ENCODE measurements at regions of chr15 and their contacts with region 1.

Region 1: DNA sequence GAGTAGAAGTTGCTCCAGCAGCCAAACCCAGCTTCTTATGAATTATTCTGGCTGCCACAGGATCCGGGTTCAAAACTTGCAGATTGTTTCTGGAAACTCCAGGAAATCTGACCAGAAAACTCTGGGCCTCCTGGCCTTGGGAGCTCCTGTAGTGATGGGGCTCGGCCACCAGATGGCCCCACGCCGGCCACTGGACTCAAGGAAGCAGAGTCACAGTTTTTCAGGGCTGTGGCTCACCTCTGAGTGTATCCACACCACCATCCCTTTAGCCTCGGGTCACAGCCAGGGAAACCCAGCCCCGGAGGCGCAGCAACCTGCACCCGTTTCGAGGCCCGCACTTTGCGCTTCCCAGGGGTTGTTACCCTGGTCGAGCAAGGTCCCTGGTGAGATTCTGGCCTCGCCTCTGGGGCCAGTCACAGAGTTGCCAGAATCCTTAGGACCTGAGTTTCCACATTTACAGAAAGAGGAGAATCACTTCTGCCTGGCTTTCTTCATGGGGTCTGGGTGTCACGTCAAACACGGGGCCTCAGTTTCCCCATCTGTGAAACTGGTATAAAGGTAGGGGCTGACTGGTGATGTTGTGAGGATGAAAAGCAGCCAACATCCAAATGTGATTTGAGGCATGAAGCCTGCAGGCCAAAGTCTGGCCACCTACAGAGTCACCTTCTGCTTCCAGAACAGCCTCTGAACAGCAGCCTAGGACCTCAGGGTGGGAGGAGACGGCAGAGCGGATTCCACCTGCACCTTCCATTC is 53.5 kb upstream of the LCTL start:
- DNase-seq: peak; percentile 76 to 77
- H3K4me3 ChIP-seq: no peak overlapping the region
- H3K27ac ChIP-seq: peak overlapping the region; percentile 6 to 21
- H3K4me1 ChIP-seq: peaks cover 0 to 9% of the 10 kb centered on the region in 2 donors
- H3K27me3 ChIP-seq: no peaks in the 10 kb centered on the region
- CTCF ChIP-seq: peak; percentile 89 to 94 (median 92)
- POLR2A ChIP-seq: no peak

Region 2: GRCh38 chr15:66657185-66658020 is 38.1 kb after region 1 on chr15:
- intact Hi-C with region 1: no loop called
- DNase-seq: no peak
- H3K4me3 ChIP-seq: no peak overlapping the region
- H3K27ac ChIP-seq: no peak overlapping the region
- H3K4me1 ChIP-seq: no peaks in the 10 kb centered on the region
- H3K27me3 ChIP-seq: no peaks in the 10 kb centered on the region
- CTCF ChIP-seq: no peak
- POLR2A ChIP-seq: no peak

Region 3: GRCh38 chr15:66700802-66701421 is 81.6 kb after region 1 on chr15:
- intact Hi-C with region 1: loop called (anchors 10 kb)
- DNase-seq: peak; percentile 96 to 97
- H3K4me3 ChIP-seq: peak overlapping the region; percentile 64 to 66
- H3K27ac ChIP-seq: peak overlapping the region; percentile 70 to 88
- H3K4me1 ChIP-seq: peaks cover 0 to under 1% of the 10 kb centered on the region in 2 donors
- H3K27me3 ChIP-seq: no peaks in the 10 kb centered on the region
- CTCF ChIP-seq: no peak
- POLR2A ChIP-seq: peak in 1 of 2 donors; percentile 24

Region 4: GRCh38 chr15:67685008-67685599 is 1065.8 kb after region 1 on chr15:
- intact Hi-C with region 1: no loop called
- DNase-seq: no peak
- H3K4me3 ChIP-seq: no peak overlapping the region
- H3K27ac ChIP-seq: no peak overlapping the region
- H3K4me1 ChIP-seq: no peaks in the 10 kb centered on the region
- H3K27me3 ChIP-seq: no peaks in the 10 kb centered on the region
- CTCF ChIP-seq: no peak
- POLR2A ChIP-seq: no peak